PC-3 (cell line): ENCODE measurements at regions of chr10 and their contacts with region 1.

Region 1: DNA sequence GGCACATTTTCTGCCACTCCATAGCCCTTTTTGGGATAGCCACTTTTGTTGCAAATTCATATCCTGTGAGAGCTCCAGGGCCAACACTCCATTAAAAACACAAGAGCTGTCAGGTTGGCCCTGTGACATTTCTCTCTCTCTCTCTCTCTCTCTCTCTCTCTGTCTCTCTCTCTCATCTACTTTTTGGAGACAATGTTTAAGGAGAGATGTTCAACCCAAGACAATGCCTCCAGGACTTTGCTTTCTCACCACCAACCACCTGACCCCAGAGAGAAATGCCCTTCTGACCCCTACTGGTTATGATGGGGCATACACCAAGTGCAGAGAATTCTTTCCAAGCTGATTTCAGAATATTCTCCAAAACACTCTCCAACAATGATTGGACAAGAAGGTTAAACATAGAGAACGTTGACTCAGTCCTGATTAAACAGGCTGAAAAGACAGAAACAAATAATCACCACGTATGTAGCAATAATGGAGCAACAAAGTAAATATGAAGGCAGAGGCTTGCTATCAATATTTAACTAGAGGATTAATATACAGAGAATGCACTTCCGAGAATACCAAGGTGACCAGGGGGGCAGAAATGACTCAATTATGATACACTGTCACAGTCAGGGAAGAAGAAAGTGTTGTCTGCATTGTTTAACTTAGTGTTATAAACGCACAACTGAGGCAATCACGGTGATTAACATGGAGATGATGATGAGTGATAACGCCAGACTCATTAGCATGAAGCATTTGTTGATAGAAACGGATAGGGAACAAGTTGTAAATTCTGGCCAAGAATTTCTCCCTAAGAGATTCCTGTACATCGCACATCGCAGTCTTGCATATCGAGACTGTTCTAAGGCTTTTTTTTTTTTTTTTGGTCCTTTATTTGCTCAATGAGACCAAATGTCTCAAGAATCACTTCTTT is 178.5 kb downstream of the NRP1 start:
- DNase-seq: peak; percentile 100
- ATAC-seq: peak; percentile 90
- H3K4me3 ChIP-seq: peak overlapping the region; percentile 15
- H3K27ac ChIP-seq: peak overlapping the region; percentile 65
- H3K4me1 ChIP-seq: peaks cover 36% of the 10 kb centered on the region
- H3K27me3 ChIP-seq: no peaks in the 10 kb centered on the region
- CTCF ChIP-seq: no peak

Region 2: GRCh38 chr10:32980558-32981468 is 175.2 kb before region 1 on chr10:
- CTCF ChIA-PET with region 1: no interaction called
- POLR2A ChIA-PET with region 1: no interaction called
- intact Hi-C with region 1: loop called (anchors 1 kb)
- DNase-seq: peak; percentile 100
- ATAC-seq: peak; percentile 83
- H3K4me3 ChIP-seq: peak overlapping the region; percentile 61
- H3K27ac ChIP-seq: peak overlapping the region; percentile 94
- H3K4me1 ChIP-seq: peaks cover 63% of the 10 kb centered on the region
- H3K27me3 ChIP-seq: no peaks in the 10 kb centered on the region
- CTCF ChIP-seq: no peak

Region 3: GRCh38 chr10:33134011-33134751 is 21.8 kb before region 1 on chr10:
- CTCF ChIA-PET with region 1: interaction called, 23 read pairs
- POLR2A ChIA-PET with region 1: interaction called, 8 read pairs
- intact Hi-C with region 1: loop called (anchors 1 kb)
- DNase-seq: peak; percentile 100
- ATAC-seq: peak; percentile 95
- H3K4me3 ChIP-seq: no peak overlapping the region; the same call in 1 of the 2 replicates
- H3K27ac ChIP-seq: peak overlapping the region; percentile 65
- H3K4me1 ChIP-seq: peaks cover 41% of the 10 kb centered on the region
- H3K27me3 ChIP-seq: no peaks in the 10 kb centered on the region
- CTCF ChIP-seq: no peak

Region 4: GRCh38 chr10:33193057-33193700 is 37.2 kb after region 1 on chr10:
- CTCF ChIA-PET with region 1: interaction called, 46 read pairs
- POLR2A ChIA-PET with region 1: interaction called, 4 read pairs
- intact Hi-C with region 1: loop called (anchors 1 kb)
- DNase-seq: peak; percentile 100
- ATAC-seq: peak; percentile 74
- H3K4me3 ChIP-seq: no peak overlapping the region
- H3K27ac ChIP-seq: peak overlapping the region; percentile 72
- H3K4me1 ChIP-seq: peaks cover 54% of the 10 kb centered on the region
- H3K27me3 ChIP-seq: no peaks in the 10 kb centered on the region
- CTCF ChIP-seq: no peak

Region 5: DNA sequence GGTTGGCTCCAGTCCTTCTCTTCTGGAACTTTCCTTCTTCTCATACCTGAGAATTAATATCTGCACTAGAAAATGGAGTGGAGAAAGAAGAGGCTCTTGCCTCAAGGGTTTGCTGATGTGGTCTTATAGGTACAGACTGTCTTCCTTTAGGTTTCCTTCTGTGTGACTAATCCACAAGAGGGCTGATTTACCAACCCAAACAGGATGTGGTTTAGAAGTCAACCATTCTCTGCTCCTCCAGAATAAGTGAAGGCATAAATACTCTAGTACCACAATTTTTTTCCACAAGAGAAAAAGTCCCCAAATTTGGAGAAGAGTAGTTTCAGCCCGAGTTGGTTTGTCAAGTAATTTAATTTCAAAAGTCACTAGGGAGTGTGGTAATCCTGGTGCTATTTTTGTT is 92.7 kb after region 1 on chr10:
- CTCF ChIA-PET with region 1: interaction called, 7 read pairs
- POLR2A ChIA-PET with region 1: no interaction called
- intact Hi-C with region 1: loop called (anchors 1 kb)
- DNase-seq: peak; percentile 100
- ATAC-seq: peak; percentile 43
- H3K4me3 ChIP-seq: no peak overlapping the region
- H3K27ac ChIP-seq: peak overlapping the region; percentile 65
- H3K4me1 ChIP-seq: peaks cover 52% of the 10 kb centered on the region
- H3K27me3 ChIP-seq: no peaks in the 10 kb centered on the region
- CTCF ChIP-seq: no peak

Region 6: GRCh38 chr10:33291053-33291592 is 135.1 kb after region 1 on chr10:
- CTCF ChIA-PET with region 1: no interaction called
- POLR2A ChIA-PET with region 1: no interaction called
- intact Hi-C with region 1: loop called (anchors 1 kb)
- DNase-seq: peak; percentile 100
- ATAC-seq: peak; percentile 78
- H3K4me3 ChIP-seq: peak overlapping the region; percentile 16
- H3K27ac ChIP-seq: peak overlapping the region; percentile 60
- H3K4me1 ChIP-seq: peaks cover 78% of the 10 kb centered on the region
- H3K27me3 ChIP-seq: no peaks in the 10 kb centered on the region
- CTCF ChIP-seq: no peak